ENCODE measurements at regions of chr19 and their contacts with region 1.

Region 1: GRCh38 chr19:43354305-43354627 is 780 bp downstream of the CD177 start:
- DNase-seq: peak in 1 of 4 experiments; percentile 11
- ATAC-seq: no peak
- H3K4me3 ChIP-seq: no peak overlapping the region
- H3K27ac ChIP-seq: no peak overlapping the region
- H3K4me1 ChIP-seq: no peaks in the 10 kb centered on the region; a peak in 2 of 5 replicates
- H3K27me3 ChIP-seq: peaks cover 0 to 19% of the 10 kb centered on the region in 2 experiments; a peak in 3 of 5 replicates
- CTCF ChIP-seq: no peak
- EP300 ChIP-seq: no peak
- POLR2A ChIP-seq: no peak
- RAD21 ChIP-seq: no peak

Region 2: DNA sequence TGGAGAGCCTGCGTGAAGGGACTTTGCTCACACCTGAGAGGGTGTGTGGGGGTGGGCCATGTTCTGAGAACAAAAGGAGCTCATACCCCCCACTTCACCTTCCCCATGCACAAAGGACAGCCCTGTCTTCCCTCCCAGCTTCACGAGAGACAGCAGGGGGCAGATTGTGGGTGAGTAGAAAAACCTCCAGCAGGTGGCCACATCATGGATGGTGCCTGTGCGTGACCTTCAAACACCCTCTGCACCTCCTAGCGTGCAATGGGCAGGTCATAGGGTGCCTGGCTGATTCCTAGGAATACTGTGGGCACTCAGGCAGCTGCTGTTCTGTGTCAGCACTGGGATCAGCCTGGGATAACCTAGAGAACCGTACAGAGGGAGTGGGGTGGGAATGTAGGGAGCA is 48.6 kb before region 1 on chr19:
- CTCF ChIA-PET with region 1: no interaction called
- POLR2A ChIA-PET with region 1: no interaction called
- in situ Hi-C with region 1: no loop called
- intact Hi-C with region 1: no loop called
- DNase-seq: peak; percentile 10 to 19 (median 13)
- ATAC-seq: peak; percentile 69
- H3K4me3 ChIP-seq: no peak overlapping the region
- H3K27ac ChIP-seq: no peak overlapping the region
- H3K4me1 ChIP-seq: no peaks in the 10 kb centered on the region
- H3K27me3 ChIP-seq: no peaks in the 10 kb centered on the region; a peak in 1 of 5 replicates
- CTCF ChIP-seq: peak; percentile 41 to 87 (median 58)
- EP300 ChIP-seq: no peak
- POLR2A ChIP-seq: no peak
- RAD21 ChIP-seq: no peak

Region 3: DNA sequence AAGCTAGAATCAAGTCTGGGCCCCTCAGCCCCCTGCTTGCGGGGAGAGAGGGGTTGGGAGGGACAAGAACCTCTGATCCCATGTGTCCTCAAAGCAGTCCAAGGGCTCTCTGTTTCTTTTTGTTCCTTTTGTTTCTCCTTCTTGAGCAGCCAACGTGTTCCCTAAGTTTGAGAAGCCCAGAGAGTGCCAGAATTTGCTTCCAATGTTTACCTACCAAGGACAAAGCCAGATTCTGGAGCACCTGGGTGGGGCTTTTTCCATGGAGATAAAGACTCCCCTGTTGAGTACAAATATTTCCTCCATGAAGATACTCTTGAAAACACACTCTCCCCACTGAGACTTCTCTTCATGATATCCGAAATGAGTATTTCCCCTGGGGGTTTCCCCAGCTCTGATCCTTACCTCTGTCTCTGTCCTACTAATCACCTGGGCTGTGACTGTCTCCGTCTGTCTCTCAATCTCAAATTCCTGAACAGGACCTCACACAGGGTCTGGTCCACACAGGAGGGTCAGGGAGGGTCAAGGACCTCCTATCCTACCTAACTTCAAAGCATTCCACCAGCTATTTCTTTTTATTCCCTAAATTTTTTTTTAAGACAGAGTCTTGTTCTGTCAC is 26.6 kb after region 1 on chr19:
- CTCF ChIA-PET with region 1: no interaction called
- POLR2A ChIA-PET with region 1: no interaction called
- in situ Hi-C with region 1: loop called (anchors 5 kb)
- intact Hi-C with region 1: no loop called
- DNase-seq: no peak
- ATAC-seq: no peak
- H3K4me3 ChIP-seq: no peak overlapping the region
- H3K27ac ChIP-seq: no peak overlapping the region
- H3K4me1 ChIP-seq: no peaks in the 10 kb centered on the region
- H3K27me3 ChIP-seq: peaks cover 0 to 6% of the 10 kb centered on the region in 2 experiments; a peak in 1 of 5 replicates
- CTCF ChIP-seq: no peak
- EP300 ChIP-seq: no peak
- POLR2A ChIP-seq: no peak
- RAD21 ChIP-seq: no peak

Measured in K562 (cell line).